ENCODE measurements at regions of chr15 and their contacts with region 1.

Region 1: GRCh38 chr15:33975022-33975565 is 6.8 kb downstream of the CHRM5 start:
- DNase-seq: peak; percentile 37
- ATAC-seq: peak; percentile 57; the same call in 1 of the 2 replicates
- H3K4me3 ChIP-seq: no peak overlapping the region
- H3K27ac ChIP-seq: no peak overlapping the region
- H3K4me1 ChIP-seq: no peaks in the 10 kb centered on the region
- H3K27me3 ChIP-seq: no peaks in the 10 kb centered on the region
- CTCF ChIP-seq: peak; percentile 43; the same call in 1 of the 2 replicates

Region 2: GRCh38 chr15:33994005-33994615 is 19.0 kb after region 1 on chr15:
- CTCF ChIA-PET with region 1: no interaction called
- POLR2A ChIA-PET with region 1: no interaction called
- intact Hi-C with region 1: loop called (anchors 2 kb)
- DNase-seq: peak; percentile 68
- ATAC-seq: peak; percentile 98
- H3K4me3 ChIP-seq: no peak overlapping the region
- H3K27ac ChIP-seq: no peak overlapping the region
- H3K4me1 ChIP-seq: no peaks in the 10 kb centered on the region
- H3K27me3 ChIP-seq: no peaks in the 10 kb centered on the region
- CTCF ChIP-seq: peak; percentile 80

Region 3: GRCh38 chr15:34014556-34014955 is 39.5 kb after region 1 on chr15:
- CTCF ChIA-PET with region 1: no interaction called
- POLR2A ChIA-PET with region 1: no interaction called
- intact Hi-C with region 1: no loop called
- DNase-seq: no peak
- ATAC-seq: no peak
- H3K4me3 ChIP-seq: no peak overlapping the region
- H3K27ac ChIP-seq: no peak overlapping the region
- H3K4me1 ChIP-seq: no peaks in the 10 kb centered on the region
- H3K27me3 ChIP-seq: no peaks in the 10 kb centered on the region
- CTCF ChIP-seq: no peak